PC-3 (cell line): ENCODE measurements at regions of chr6 and their contacts with region 1.

Region 1: DNA sequence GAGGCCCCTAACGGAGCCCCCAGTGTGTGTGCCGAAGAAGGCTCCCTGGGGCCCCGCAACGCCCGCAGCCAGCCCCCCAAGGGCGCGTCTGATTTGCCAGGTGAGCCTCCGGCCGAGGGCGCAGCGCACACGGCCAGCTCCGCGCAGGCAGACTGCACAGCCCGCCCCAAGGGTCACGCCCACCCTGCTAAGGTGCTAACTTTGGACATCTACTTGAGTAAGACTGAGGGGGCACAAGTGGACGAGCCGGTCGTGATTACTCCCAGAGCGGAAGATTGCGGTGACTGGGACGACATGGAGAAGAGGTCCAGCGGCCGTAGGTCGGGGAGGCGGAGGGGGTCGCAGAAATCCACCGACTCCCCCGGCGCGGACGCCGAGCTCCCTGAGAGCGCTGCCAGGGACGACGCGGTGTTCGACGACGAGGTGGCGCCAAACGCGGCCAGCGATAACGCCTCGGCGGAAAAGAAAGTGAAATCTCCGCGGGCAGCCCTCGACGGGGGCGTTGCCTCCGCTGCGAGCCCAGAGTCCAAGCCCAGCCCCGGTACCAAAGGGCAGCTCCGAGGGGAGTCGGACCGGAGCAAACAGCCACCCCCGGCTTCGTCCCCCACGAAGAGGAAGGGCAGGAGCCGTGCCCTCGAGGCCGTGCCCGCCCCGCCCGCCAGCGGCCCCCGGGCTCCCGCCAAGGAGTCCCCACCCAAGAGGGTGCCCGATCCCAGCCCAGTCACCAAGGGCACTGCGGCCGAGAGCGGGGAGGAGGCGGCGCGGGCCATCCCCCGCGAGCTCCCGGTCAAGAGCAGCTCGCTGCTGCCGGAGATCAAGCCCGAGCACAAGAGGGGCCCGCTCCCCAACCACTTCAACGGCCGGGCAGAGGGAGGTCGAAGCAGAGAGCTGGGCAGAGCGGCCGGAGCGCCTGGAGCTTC is 117.0 kb downstream of the RTN4IP1 start:
- DNase-seq: peak; percentile 58
- ATAC-seq: peak; percentile 33
- H3K4me3 ChIP-seq: peak overlapping the region; percentile 87
- H3K27ac ChIP-seq: peak overlapping the region; percentile 84
- H3K4me1 ChIP-seq: peaks cover 35% of the 10 kb centered on the region
- H3K27me3 ChIP-seq: no peaks in the 10 kb centered on the region
- CTCF ChIP-seq: peak; percentile 22; the same call in 1 of the 2 replicates

Region 2: DNA sequence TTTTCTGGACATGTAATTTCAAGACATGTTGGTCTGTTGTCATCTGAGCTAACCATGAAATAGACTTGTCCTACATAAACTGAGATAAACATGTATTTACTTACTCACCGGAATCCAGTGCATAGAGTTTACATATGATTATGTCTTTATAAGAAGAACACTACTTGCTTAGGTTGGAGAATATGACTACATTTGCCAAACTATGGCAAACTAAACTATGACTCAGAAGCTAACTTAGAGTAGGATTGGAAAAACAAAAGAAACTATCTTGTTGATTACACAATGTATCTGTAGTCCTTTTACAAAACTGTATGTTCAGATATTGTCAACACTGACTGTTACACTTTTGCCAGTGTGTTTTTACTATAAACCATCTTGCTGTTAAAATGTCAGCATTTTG is 38.5 kb before region 1 on chr6:
- CTCF ChIA-PET with region 1: no interaction called
- POLR2A ChIA-PET with region 1: no interaction called
- intact Hi-C with region 1: loop called (anchors 5 kb)
- DNase-seq: peak; percentile 75
- ATAC-seq: peak; percentile 74
- H3K4me3 ChIP-seq: no peak overlapping the region
- H3K27ac ChIP-seq: peak overlapping the region; percentile 67
- H3K4me1 ChIP-seq: peaks cover 43% of the 10 kb centered on the region
- H3K27me3 ChIP-seq: no peaks in the 10 kb centered on the region
- CTCF ChIP-seq: no peak

Region 3: DNA sequence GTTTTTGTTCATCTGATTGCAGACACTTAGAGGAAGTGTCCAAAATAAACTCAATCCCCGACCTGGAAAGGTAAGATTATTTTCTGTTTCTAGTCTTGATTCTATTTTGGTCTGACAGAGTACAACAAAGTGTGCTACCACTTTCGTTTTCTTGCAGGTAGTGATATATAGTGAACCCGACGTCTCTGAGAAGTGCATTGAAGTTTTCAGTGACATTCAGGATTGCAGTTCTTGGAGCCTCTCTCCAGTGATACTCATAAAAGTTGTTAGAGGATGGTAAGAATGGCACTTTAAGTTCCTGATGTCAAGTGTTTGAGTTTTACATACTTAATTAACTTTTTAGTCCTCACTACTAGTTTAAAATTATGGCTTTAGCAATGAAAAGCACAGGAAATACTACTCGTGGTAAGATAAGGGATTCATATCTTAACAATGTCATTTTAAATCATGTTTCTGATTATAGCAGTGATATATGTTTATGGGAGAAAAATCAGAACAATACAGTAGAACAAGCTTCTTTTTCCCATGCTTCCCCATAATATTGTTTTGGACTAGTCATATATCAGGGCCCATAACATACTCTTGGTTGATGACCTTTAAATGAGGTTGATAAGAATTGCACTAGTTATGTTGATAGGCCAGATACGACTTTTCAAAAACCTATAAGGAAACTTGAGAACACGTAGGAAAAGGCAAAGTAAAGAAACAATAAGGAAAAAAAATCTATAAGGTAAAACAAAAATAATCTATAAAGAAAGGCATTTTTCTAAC is 13.0 kb after region 1 on chr6:
- CTCF ChIA-PET with region 1: interaction called, 5 read pairs
- POLR2A ChIA-PET with region 1: interaction called, 7 read pairs
- intact Hi-C with region 1: loop called (anchors 1 kb)
- DNase-seq: peak; percentile 41
- ATAC-seq: peak; percentile 41
- H3K4me3 ChIP-seq: peak overlapping the region; percentile 72
- H3K27ac ChIP-seq: peak overlapping the region; percentile 61
- H3K4me1 ChIP-seq: peaks cover 55% of the 10 kb centered on the region
- H3K27me3 ChIP-seq: no peaks in the 10 kb centered on the region
- CTCF ChIP-seq: no peak

Region 4: GRCh38 chr6:106556368-106556960 is 44.2 kb after region 1 on chr6:
- CTCF ChIA-PET with region 1: no interaction called
- POLR2A ChIA-PET with region 1: no interaction called
- intact Hi-C with region 1: loop called (anchors 1 kb)
- DNase-seq: peak; percentile 60
- ATAC-seq: peak; percentile 57
- H3K4me3 ChIP-seq: no peak overlapping the region
- H3K27ac ChIP-seq: no peak overlapping the region
- H3K4me1 ChIP-seq: peaks cover 9% of the 10 kb centered on the region; the same call in 1 of the 2 replicates
- H3K27me3 ChIP-seq: no peaks in the 10 kb centered on the region
- CTCF ChIP-seq: peak; percentile 68

Region 5: DNA sequence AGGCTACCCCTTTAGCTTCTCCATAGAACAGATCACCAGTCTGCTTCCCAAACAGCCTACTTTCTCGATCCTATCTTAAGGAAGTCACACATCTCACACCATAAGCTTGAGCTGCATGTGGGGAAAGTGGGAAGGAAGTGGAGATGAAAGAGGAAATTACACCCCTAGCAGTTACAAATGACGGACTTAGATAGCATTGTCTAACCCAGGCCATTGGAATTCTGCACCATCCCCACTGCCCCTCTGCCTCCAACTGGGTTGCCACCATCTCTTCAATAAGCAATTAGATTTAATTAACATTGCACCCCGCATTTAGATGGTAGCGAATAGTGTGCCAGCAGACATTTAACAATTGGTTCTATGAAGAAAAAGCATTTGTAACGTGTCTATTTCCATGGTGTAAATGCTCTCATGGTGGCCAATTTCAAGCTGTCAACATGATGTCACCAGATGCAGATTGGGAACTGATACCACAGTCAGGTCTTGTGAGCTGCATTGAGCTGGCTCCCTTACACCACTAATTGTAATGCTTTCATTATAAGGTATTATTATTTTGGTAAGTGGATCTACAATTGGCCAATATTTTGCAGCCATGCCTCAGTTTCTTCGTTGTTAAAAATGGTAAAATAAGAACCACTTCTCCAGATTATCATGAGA is 337.5 kb after region 1 on chr6:
- CTCF ChIA-PET with region 1: no interaction called
- POLR2A ChIA-PET with region 1: no interaction called
- intact Hi-C with region 1: no loop called
- DNase-seq: no peak
- ATAC-seq: no peak
- H3K4me3 ChIP-seq: no peak overlapping the region
- H3K27ac ChIP-seq: no peak overlapping the region
- H3K4me1 ChIP-seq: no peaks in the 10 kb centered on the region; the same call in 1 of the 2 replicates
- H3K27me3 ChIP-seq: no peaks in the 10 kb centered on the region
- CTCF ChIP-seq: no peak

Region 6: GRCh38 chr6:106913676-106914280 is 401.5 kb after region 1 on chr6:
- CTCF ChIA-PET with region 1: no interaction called
- POLR2A ChIA-PET with region 1: no interaction called
- intact Hi-C with region 1: no loop called
- DNase-seq: peak; percentile 81
- ATAC-seq: peak; percentile 48; the same call in 1 of the 2 replicates
- H3K4me3 ChIP-seq: no peak overlapping the region; the same call in 1 of the 2 replicates
- H3K27ac ChIP-seq: peak overlapping the region; percentile 93
- H3K4me1 ChIP-seq: peaks cover 27% of the 10 kb centered on the region
- H3K27me3 ChIP-seq: no peaks in the 10 kb centered on the region
- CTCF ChIP-seq: no peak